Common myeloid progenitor, CD34-positive (primary cell): ENCODE measurements at regions of chr1 and their contacts with region 1.

Region 1: DNA sequence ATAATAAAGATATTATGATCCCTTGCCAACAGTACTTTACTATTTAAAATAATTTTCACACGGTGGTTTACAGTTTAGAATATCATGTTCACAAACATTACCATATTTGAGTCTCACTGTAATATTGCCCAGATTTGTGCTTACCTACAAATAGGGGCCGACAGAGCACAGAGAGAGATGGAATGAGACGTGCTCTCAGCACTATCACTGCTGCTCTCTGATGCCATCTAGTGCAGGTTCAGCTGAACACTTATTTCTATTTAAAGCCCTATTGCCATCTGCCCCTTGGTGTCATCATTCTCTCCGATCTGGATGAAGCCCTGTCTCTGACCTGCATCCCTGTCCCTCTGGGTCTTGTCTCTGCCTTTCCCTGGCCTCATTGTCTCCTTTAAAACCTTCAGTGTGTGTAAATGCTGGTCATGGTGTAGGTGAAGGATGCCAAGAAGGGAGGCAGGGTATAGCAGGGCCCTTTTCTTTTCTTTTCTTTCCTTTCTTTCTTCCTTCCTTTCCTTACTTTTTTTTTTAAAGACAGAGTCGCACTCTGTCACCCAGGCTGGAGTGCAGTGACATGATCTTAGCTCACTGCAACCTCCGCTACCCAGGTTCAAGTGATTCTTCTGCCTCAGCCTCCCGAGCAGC is 6.9 kb upstream of the GPATCH4 start:
- DNase-seq: peak; percentile 80 to 88 (median 85)
- H3K4me3 ChIP-seq: no peak overlapping the region
- H3K27ac ChIP-seq: no peak overlapping the region
- H3K4me1 ChIP-seq: peaks cover 0 to 8% (median 3%) of the 10 kb centered on the region in 4 experiments
- H3K27me3 ChIP-seq: peaks cover 0 to 3% (median 0%) of the 10 kb centered on the region in 5 experiments

Region 2: DNA sequence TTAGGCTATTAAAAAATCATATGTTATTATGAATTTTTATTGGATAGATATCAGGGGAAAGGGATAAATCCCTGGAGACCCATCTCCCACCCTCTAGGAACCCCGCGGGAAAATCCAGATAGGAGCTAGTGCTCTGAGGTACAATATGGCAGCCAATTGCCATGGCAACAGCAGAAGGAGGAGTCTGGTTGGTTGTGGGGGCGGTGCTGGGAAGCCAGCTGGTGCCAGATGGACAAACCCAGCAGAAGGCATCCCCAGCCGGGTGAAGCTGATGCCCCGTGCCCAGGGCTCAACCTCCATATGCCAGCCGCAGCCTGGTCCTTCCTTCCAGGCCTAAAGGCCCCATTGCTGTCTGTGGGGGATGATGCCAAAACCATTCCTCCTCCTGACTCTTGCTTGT is 200.8 kb before region 1 on chr1:
- CTCF ChIA-PET with region 1: no interaction called
- POLR2A ChIA-PET with region 1: no interaction called
- DNase-seq: no peak
- H3K4me3 ChIP-seq: no peak overlapping the region
- H3K27ac ChIP-seq: no peak overlapping the region
- H3K4me1 ChIP-seq: no peaks in the 10 kb centered on the region
- H3K27me3 ChIP-seq: peaks cover 2 to 75% (median 41%) of the 10 kb centered on the region in 5 experiments

Region 3: DNA sequence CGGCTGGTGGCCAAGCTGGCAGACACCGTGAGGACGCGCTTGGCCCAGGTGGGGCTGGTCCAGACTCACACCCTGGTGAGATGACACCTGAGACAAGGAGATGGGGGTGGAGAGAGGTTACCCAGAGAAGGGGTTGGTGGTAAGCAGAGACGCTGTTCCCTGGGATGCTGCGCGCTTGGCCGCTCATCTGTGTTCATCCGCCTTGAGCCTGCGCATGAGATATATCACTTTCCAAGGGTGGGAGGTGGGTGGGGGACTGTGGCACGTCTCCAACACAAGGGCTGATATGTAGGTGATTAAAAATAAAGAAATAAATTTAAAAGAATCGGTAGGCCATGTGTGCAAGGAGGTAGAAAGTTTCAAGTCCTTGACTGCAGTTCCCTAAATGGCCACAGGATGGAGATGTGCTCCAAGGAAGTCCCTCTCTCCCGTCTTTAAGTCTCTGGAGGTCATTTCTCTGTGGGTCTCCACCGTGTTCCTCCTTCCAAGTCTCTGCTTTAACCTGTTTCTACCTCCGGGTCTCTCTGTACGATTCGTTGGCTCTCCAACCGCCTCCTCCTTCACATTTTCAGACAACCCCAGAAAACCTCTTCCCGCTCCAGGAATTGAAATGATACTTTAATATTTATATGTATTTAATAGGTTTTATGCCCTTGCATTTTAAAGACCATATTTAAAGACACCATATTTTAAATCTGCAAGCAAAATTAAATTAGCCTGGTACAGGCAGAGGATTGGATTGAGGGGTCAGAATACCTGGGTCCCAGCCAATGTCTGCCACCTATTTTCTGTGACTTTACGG is 24.1 kb before region 1 on chr1:
- CTCF ChIA-PET with region 1: interaction called, 49 read pairs
- POLR2A ChIA-PET with region 1: interaction called, 3 read pairs
- DNase-seq: peak; percentile 87 to 93 (median 87)
- H3K4me3 ChIP-seq: peak overlapping the region in 1 of 7 experiments; percentile 75
- H3K27ac ChIP-seq: peak overlapping the region in 1 of 2 experiments; percentile 85
- H3K4me1 ChIP-seq: peaks cover 0 to 48% (median 33%) of the 10 kb centered on the region in 4 experiments
- H3K27me3 ChIP-seq: no peaks in the 10 kb centered on the region

Region 4: DNA sequence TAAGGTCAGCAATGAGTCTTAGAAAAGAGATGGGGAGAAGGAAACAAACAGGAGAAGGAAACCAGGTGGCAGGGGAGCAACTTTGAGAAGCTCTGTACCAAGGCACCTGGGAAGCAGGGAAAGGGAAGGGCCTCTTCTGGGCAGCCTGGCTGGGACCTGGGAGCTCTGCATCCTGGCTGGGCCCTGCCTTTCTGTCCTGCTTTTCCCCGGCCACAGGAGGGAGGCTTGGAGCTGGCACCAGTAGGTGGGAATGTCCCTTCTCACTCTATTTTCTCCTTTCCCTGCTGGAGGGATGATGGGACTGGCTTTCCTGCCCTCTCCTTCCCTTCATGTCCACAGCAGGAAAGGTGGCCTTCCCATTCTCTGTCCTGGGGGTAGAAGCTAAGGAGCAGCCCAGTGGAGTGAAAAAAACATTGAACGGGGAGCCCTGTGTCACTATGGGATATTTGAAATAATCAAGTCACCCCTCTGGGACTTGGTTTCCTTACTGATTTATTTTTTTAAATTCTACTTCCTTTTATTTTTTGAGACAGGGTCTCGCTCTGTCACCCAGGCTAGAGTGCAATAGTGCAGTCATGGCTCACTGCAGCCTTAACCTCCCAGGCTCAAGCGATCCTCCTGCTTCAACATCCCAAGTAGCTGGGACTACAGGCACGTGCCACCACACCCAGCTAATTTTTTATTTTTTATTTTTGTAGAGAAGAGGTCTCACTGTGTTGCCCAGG is 74.2 kb after region 1 on chr1:
- CTCF ChIA-PET with region 1: no interaction called
- POLR2A ChIA-PET with region 1: no interaction called
- DNase-seq: no peak
- H3K4me3 ChIP-seq: no peak overlapping the region
- H3K27ac ChIP-seq: no peak overlapping the region
- H3K4me1 ChIP-seq: peaks cover 0 to 13% (median 9%) of the 10 kb centered on the region in 4 experiments
- H3K27me3 ChIP-seq: peaks cover 0 to 49% (median 21%) of the 10 kb centered on the region in 5 experiments